B cell (primary cell): ENCODE measurements at regions of chr7 and their contacts with region 1.

Region 1: GRCh38 chr7:150435390-150436073 is 14.9 kb upstream of the GIMAP8 start:
- DNase-seq: peak; percentile 94
- ATAC-seq: peak; percentile 92
- H3K4me3 ChIP-seq: peak overlapping the region in 1 of 5 experiments; percentile 26
- H3K4me3 Mint-ChIP-seq: peak overlapping the region; percentile 73
- H3K27ac ChIP-seq: peak overlapping the region; percentile 98 to 99
- H3K27ac Mint-ChIP-seq: peak overlapping the region; percentile 95
- H3K4me1 ChIP-seq: peaks cover 40 to 43% of the 10 kb centered on the region in 2 donors
- H3K4me1 Mint-ChIP-seq: peaks cover 59% of the 10 kb centered on the region
- H3K27me3 ChIP-seq: no peaks in the 10 kb centered on the region
- H3K27me3 Mint-ChIP-seq: no peaks in the 10 kb centered on the region
- CTCF ChIP-seq: no peak

Region 2: GRCh38 chr7:150322833-150323681 is 112.5 kb before region 1 on chr7 and contains the starts of genes ACTR3C and LRRC61:
- CTCF ChIA-PET with region 1: interaction called, 3 read pairs
- POLR2A ChIA-PET with region 1: no interaction called
- intact Hi-C with region 1: loop called (anchors 1 kb)
- DNase-seq: peak; percentile 79
- ATAC-seq: peak; percentile 78
- H3K4me3 ChIP-seq: peak within 1 kb of the TSS; percentile 75 to 94 (median 88)
- H3K4me3 Mint-ChIP-seq: peak within 1 kb of the TSS; percentile 99
- H3K27ac ChIP-seq: peak within 1 kb of the TSS; percentile 82 to 88
- H3K27ac Mint-ChIP-seq: peak within 1 kb of the TSS; percentile 98
- H3K4me1 ChIP-seq: peaks cover 11 to 34% of the 10 kb centered on the region in 2 donors
- H3K4me1 Mint-ChIP-seq: peaks cover 47% of the 10 kb centered on the region
- H3K27me3 ChIP-seq: no peaks in the 10 kb centered on the region
- H3K27me3 Mint-ChIP-seq: no peaks in the 10 kb centered on the region
- CTCF ChIP-seq: no peak
- total RNA-seq, gene ACTR3C: 20.7 TPM in 2 replicates
- total RNA-seq, gene LRRC61: 12.8 and 15.5 TPM in 2 replicates

Region 3: DNA sequence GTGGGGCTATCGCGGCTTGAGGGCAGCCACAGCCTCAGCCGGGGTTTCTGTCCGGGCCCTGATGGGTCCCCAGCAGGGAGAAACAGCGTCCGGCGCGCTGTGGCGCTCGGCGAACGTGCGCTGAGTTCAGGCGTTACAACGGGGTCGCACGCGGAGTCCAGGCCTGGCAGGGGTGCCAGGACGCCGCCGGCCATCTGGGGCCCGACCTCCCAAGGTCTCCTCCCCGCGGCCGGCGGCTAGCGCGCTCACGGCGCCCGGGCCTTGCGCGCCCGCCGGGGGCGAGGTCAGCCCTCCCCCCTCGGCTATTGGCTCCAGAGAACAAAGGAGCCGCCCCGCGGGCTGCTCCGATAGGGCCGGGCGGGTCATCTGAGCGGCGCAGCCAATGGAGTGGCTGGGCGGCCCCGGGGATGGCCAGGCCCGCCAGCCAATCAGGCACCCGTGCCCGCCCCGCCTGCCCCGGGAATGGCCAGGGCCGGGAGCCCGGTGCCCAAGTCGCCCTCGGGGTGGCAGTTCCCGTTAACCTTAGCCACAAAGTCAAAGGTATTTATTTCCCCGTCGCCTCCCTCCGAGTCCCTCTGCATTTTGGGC is 56.6 kb before region 1 on chr7 and contains the start of gene ZNF775:
- CTCF ChIA-PET with region 1: interaction called, 3 read pairs
- POLR2A ChIA-PET with region 1: no interaction called
- intact Hi-C with region 1: loop called (anchors 1 kb)
- DNase-seq: peak; percentile 93
- ATAC-seq: peak; percentile 91
- H3K4me3 ChIP-seq: peak within 1 kb of the TSS; percentile 45 to 91 (median 77)
- H3K4me3 Mint-ChIP-seq: peak within 1 kb of the TSS; percentile 96
- H3K27ac ChIP-seq: peak within 1 kb of the TSS; percentile 84 to 85
- H3K27ac Mint-ChIP-seq: peak within 1 kb of the TSS; percentile 90
- H3K4me1 ChIP-seq: peaks cover 22 to 59% of the 10 kb centered on the region in 2 donors
- H3K4me1 Mint-ChIP-seq: peaks cover 71% of the 10 kb centered on the region
- H3K27me3 ChIP-seq: no peaks in the 10 kb centered on the region
- H3K27me3 Mint-ChIP-seq: no peaks in the 10 kb centered on the region
- CTCF ChIP-seq: peak; percentile 14
- total RNA-seq, gene ZNF775: 12.1 and 12.5 TPM in 2 replicates

Region 4: GRCh38 chr7:150390205-150390604 is 45.3 kb before region 1 on chr7:
- CTCF ChIA-PET with region 1: no interaction called
- POLR2A ChIA-PET with region 1: no interaction called
- intact Hi-C with region 1: no loop called
- DNase-seq: no peak
- ATAC-seq: no peak
- H3K4me3 ChIP-seq: no peak overlapping the region
- H3K4me3 Mint-ChIP-seq: no peak overlapping the region
- H3K27ac ChIP-seq: no peak overlapping the region
- H3K27ac Mint-ChIP-seq: no peak overlapping the region
- H3K4me1 ChIP-seq: no peaks in the 10 kb centered on the region
- H3K4me1 Mint-ChIP-seq: no peaks in the 10 kb centered on the region
- H3K27me3 ChIP-seq: no peaks in the 10 kb centered on the region
- H3K27me3 Mint-ChIP-seq: no peaks in the 10 kb centered on the region
- CTCF ChIP-seq: no peak

Region 5: DNA sequence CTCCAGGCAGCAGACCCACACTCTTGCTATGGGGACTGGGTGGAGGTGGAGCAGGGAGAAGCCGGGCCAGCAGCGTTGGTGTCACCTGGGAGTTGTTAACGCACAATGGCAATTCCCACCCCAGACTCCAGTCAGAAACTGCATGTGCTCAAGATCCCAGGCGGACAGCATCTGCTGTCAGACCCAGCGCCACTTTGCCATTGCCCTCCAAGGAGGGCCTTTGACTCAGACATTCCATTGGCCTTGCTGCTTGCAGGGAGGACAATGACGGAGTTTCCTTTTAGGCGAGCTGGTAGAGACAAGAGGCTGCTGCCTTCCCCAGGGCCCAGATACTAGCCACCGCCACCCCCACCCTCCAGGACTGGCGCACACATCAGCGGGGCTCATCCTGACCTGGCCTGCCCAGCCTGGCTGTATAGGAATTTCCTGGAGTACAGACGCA is 21.9 kb before region 1 on chr7:
- CTCF ChIA-PET with region 1: no interaction called
- POLR2A ChIA-PET with region 1: no interaction called
- intact Hi-C with region 1: no loop called
- DNase-seq: no peak
- ATAC-seq: no peak
- H3K4me3 ChIP-seq: no peak overlapping the region
- H3K4me3 Mint-ChIP-seq: no peak overlapping the region
- H3K27ac ChIP-seq: no peak overlapping the region
- H3K27ac Mint-ChIP-seq: peak overlapping the region; percentile 27
- H3K4me1 ChIP-seq: peaks cover 10 to 17% of the 10 kb centered on the region in 2 donors
- H3K4me1 Mint-ChIP-seq: peaks cover 23% of the 10 kb centered on the region
- H3K27me3 ChIP-seq: no peaks in the 10 kb centered on the region
- H3K27me3 Mint-ChIP-seq: no peaks in the 10 kb centered on the region
- CTCF ChIP-seq: no peak

Region 6: DNA sequence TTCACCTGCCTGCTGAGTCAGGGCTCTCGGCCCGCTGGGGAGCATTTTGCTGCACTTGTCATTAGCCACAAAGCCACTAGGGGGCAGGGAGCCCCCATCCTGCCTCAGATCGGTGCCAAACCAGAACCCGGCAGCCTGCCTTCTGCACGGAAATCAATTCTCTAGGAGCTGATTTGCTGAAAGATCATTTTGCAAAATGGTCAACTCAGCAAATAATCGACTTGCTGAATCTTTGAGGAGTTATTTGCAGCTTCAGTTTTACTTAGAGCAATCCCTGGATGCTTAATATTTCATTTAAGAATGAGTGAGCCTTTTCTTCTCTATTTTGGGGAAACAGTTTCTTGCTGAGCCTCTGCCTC is 13.2 kb after region 1 on chr7:
- CTCF ChIA-PET with region 1: interaction called, 13 read pairs
- POLR2A ChIA-PET with region 1: no interaction called
- intact Hi-C with region 1: loop called (anchors 1 kb)
- DNase-seq: peak; percentile 83
- ATAC-seq: peak; percentile 84
- H3K4me3 ChIP-seq: no peak overlapping the region
- H3K4me3 Mint-ChIP-seq: peak overlapping the region; percentile 3
- H3K27ac ChIP-seq: no peak overlapping the region
- H3K27ac Mint-ChIP-seq: peak overlapping the region; percentile 54
- H3K4me1 ChIP-seq: peaks cover 29 to 43% of the 10 kb centered on the region in 2 donors
- H3K4me1 Mint-ChIP-seq: peaks cover 44% of the 10 kb centered on the region
- H3K27me3 ChIP-seq: peaks cover 0 to 37% (median 6%) of the 10 kb centered on the region in 4 experiments
- H3K27me3 Mint-ChIP-seq: peaks cover 24% of the 10 kb centered on the region
- CTCF ChIP-seq: peak; percentile 93

Region 7: DNA sequence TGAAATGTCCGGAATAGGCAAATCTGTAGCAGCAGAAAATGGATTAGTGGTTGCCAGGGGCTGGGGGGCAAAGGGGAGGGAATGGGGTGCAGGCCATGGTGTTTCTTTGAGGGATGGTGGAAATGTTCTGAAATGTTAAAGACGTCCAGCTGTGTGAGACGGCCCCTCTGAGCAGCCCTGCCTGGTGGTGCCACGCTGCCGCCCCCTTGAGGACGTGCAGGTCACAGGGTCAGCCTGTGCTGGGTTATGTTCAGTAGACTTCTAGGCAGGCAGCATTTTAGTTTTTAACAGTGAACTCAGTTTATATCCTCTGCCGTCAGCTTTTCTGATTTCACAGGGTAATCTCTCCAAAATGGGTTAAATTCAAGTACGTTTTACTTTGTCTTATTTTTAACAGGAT is 915.5 kb after region 1 on chr7:
- CTCF ChIA-PET with region 1: no interaction called
- POLR2A ChIA-PET with region 1: no interaction called
- intact Hi-C with region 1: loop called (anchors 10 kb)
- DNase-seq: peak; percentile 47
- ATAC-seq: no peak
- H3K4me3 ChIP-seq: no peak overlapping the region
- H3K4me3 Mint-ChIP-seq: peak overlapping the region; percentile 56
- H3K27ac ChIP-seq: peak overlapping the region; percentile 82 to 99
- H3K27ac Mint-ChIP-seq: peak overlapping the region; percentile 76
- H3K4me1 ChIP-seq: peaks cover 36 to 41% of the 10 kb centered on the region in 2 donors
- H3K4me1 Mint-ChIP-seq: peaks cover 46% of the 10 kb centered on the region
- H3K27me3 ChIP-seq: no peaks in the 10 kb centered on the region
- H3K27me3 Mint-ChIP-seq: no peaks in the 10 kb centered on the region
- CTCF ChIP-seq: no peak